ENCODE measurements at regions of chrX and their contacts with region 1.

Region 1: DNA sequence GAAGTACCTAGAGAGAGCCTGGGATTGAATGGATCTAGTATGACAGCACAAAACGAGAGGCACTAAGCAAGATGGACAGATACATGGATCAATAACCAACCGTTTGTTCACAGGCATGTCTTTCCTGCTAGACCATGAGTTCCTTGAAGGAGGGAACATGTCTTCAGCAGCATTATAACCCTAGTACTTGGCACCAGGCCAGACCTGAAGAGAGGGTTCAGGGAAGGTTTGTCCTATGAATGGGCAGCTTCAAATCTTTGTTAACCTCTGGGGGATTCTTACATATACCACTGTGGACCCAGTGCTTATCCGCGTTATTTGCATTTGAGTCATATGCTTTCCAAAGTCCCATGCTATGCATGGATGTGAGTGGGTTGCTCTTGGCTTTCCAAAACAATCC is 547.4 kb upstream of the RPS6KA3 start:
- DNase-seq: no peak
- H3K4me3 ChIP-seq: no peak overlapping the region
- H3K27ac ChIP-seq: no peak overlapping the region
- H3K27me3 ChIP-seq: peaks cover 0 to 41% (median 0%) of the 10 kb centered on the region in 45 donors
- CTCF ChIP-seq: no peak

Region 2: DNA sequence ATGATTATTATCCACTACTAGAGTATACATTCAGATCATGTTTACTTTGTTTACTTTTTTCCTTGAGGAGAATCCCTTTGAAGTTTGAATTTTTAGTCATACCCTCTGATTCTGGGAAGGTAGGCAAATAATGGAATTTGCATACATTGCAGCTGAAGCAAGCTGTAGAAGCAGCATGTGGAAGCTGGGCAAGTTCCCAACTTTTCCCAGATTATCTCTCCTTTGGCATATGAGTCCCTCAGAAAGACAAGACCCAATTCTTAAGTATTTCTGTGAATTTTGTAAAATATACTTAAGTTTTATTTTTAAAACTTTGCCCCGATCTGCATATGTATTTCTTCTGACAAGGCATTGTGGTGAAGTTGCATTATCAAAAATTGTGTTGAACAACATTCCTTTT is 655.0 kb after region 1 on chrX:
- intact Hi-C with region 1: loop called in 1 of 2 experiments (anchors 10 kb)
- DNase-seq: no peak
- H3K4me3 ChIP-seq: no peak overlapping the region
- H3K27ac ChIP-seq: no peak overlapping the region
- H3K27me3 ChIP-seq: peaks cover 0 to 65% (median 3%) of the 10 kb centered on the region in 45 donors
- CTCF ChIP-seq: no peak

Measured in dorsolateral prefrontal cortex (tissue), 120 donors.